ENCODE measurements at regions of chr17 and their contacts with region 1.

Region 1: DNA sequence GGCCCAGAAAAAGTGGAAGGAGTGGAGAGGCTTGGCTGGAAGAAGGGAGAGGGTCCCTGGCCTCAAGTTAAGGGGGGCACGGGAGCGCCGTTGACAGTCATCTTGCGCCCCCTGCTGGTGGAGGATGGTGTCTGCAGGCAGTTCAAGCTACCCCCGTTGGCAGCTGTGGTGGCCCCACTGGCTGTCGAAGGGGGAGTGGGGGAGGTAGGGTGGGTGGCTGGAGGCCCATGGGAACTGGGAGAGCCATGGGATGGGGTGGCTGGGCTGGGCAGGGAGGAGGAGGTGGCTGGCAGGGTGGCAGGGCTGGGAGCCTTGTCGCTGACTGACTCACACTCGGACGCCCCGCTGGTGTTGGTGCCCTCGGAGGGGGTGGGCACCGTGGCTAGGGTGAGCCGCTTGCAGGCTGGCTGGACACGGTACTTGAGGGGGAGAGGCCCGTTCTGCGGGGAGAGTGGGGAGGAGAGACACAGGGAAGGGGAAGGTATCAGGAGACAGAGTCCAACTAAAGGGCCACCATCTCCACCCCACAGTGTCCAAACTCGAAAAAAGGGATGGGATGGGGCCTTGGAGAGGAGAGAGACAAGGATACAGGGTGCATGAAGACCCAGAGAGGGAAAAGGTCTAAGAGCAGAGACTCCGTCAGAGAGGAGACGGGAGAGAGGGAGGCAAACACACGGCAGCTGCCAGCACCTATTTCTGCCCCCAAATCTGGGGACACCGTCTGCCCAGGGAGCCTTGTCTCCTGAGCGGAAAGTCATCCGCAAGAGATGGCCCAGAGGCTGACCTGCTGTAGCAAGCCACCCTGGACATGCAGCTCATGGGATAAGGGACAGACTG is 5.2 kb downstream of the CISD3 start:
- DNase-seq: peak in 1 of 2 experiments; percentile 93
- H3K4me3 ChIP-seq: no peak overlapping the region
- H3K27ac ChIP-seq: no peak overlapping the region
- H3K4me1 ChIP-seq: peaks cover 0 to 12% (median 6%) of the 10 kb centered on the region in 4 experiments; a peak in 5 of 7 replicates
- H3K27me3 ChIP-seq: no peaks in the 10 kb centered on the region
- CTCF ChIP-seq: peak; percentile 85 to 99 (median 93)
- EP300 ChIP-seq: no peak
- POLR2A ChIP-seq: no peak
- RAD21 ChIP-seq: peak; percentile 87 to 89

Region 2: DNA sequence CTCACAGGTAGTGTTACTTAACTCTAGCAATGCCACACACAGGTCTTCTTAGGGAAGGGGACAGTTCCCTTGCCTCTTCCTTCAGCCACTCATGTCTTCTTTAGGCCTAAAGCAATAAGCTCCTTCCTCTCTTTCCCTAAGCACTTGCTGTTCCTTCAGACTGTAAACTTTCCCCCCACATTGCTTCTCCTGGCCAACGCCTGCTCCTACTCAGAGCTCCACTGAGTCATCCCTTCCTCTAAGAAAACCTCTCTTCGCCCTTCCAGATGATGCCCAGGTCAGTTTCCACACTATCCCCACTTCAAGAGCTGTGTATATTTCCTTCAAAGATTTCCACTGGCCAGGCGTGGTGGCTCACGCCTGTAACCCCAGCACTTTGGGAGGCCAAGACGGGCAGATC is 48.1 kb before region 1 on chr17:
- CTCF ChIA-PET with region 1: interaction called, 23 read pairs
- POLR2A ChIA-PET with region 1: interaction called, 5 read pairs
- DNase-seq: no peak
- H3K4me3 ChIP-seq: no peak overlapping the region
- H3K27ac ChIP-seq: no peak overlapping the region
- H3K4me1 ChIP-seq: no peaks in the 10 kb centered on the region
- H3K27me3 ChIP-seq: peaks cover 0 to 10% (median 3%) of the 10 kb centered on the region in 4 experiments; a peak in 2 of 7 replicates
- CTCF ChIP-seq: no peak
- EP300 ChIP-seq: no peak
- POLR2A ChIP-seq: no peak
- RAD21 ChIP-seq: no peak

Region 3: DNA sequence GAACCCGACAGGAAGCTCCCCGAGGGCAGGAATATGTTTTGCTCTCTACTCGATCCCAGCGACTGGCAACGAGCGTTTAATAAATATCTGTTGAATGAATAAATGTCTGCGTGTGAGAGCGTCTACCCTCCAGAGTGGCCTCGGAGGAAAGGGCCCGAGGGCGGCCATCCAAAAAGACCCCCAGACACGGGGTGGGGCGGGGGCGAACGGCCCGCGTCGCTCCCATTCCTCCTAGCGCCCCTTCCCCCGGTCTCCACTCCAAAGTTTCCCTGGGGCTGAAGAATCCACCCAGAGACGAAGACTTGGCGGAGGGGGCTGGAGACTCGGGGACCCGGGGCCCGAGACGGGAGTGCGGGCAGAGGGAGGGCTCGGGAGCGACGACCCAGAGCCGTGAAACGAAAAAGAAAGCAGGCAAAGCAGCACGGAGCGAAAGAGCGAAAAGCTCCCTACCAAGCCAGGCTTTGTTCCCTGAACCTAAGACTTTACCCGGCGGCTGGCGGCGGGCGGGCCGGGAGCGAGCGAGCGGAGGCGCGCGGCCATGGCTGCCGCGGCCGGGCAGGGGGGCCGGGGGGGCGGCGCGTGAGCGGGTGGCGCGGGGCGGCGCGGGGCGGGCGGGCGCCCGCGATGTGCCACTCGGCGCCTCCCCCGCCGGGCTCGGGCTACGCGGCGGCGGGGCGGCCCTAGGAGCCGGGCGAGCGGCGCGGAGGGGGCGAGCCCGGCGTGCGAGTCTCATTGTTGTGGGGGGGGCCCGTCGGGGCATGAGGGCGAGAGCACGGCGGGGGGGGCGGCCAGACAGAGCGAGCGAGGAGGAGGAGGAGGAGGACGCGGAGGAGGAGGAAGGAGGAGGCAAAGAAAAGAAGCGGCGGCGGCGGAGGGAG is 30.5 kb before region 1 on chr17 and contains the start of gene MLLT6:
- CTCF ChIA-PET with region 1: interaction called, 30 read pairs
- POLR2A ChIA-PET with region 1: interaction called, 5 read pairs
- DNase-seq: no peak
- H3K4me3 ChIP-seq: peak within 1 kb of the TSS; percentile 46 to 76 (median 60)
- H3K27ac ChIP-seq: no peak within 1 kb of the TSS
- H3K4me1 ChIP-seq: peaks cover 15 to 48% (median 32%) of the 10 kb centered on the region in 4 experiments
- H3K27me3 ChIP-seq: peaks cover 31 to 80% (median 65%) of the 10 kb centered on the region in 4 experiments
- CTCF ChIP-seq: no peak
- EP300 ChIP-seq: no peak
- POLR2A ChIP-seq: no peak
- RAD21 ChIP-seq: no peak; a peak in 1 of 4 replicates
- total RNA-seq, gene MLLT6: 7.7 and 8.0 TPM in 2 replicates

Region 4: DNA sequence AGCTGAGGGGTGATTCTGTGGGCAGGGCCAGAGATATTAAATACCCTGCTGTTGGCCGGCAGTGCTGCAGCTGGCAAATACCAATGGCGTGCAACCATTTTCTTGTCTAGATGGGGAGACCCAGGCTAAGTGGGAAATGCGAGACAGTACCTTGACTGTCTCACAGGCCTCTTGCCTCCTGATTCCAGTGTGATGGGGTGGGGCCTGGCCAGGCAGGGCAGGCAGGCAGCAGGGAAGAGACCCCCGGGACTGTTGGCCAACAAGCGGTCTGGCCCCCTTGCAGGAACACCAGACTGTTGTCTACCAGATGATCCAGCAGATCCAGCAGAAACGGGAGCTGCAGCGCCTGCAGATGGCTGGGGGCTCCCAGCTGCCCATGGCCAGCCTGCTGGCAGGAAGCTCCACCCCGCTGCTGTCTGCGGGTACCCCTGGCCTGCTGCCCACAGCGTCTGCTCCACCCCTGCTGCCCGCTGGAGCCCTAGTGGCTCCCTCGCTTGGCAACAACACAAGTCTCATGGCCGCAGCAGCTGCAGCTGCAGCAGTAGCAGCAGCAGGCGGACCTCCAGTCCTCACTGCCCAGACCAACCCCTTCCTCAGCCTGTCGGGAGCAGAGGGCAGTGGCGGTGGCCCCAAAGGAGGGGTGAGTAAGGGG is 10.9 kb before region 1 on chr17:
- CTCF ChIA-PET with region 1: interaction called, 49 read pairs
- POLR2A ChIA-PET with region 1: interaction called, 29 read pairs
- DNase-seq: no peak
- H3K4me3 ChIP-seq: no peak overlapping the region
- H3K27ac ChIP-seq: no peak overlapping the region
- H3K4me1 ChIP-seq: peaks cover 3 to 10% (median 6%) of the 10 kb centered on the region in 4 experiments
- H3K27me3 ChIP-seq: peaks cover 0 to 26% (median 13%) of the 10 kb centered on the region in 4 experiments; a peak in 6 of 7 replicates
- CTCF ChIP-seq: no peak
- EP300 ChIP-seq: no peak
- POLR2A ChIP-seq: no peak
- RAD21 ChIP-seq: no peak

Measured in H1 (cell line).